ENCODE measurements at regions of chr5 and their contacts with region 1.

Region 1: GRCh38 chr5:142748568-142749249 is 21.5 kb upstream of the ARHGAP26 start:
- DNase-seq: peak; percentile 18
- ATAC-seq: peak; percentile 66; the same call in 1 of the 2 replicates
- H3K4me3 ChIP-seq: no peak overlapping the region
- H3K27ac ChIP-seq: no peak overlapping the region
- H3K4me1 ChIP-seq: no peaks in the 10 kb centered on the region
- H3K27me3 ChIP-seq: no peaks in the 10 kb centered on the region
- CTCF ChIP-seq: peak; percentile 63

Region 2: GRCh38 chr5:141564216-141564692 is 1184.5 kb before region 1 on chr5:
- CTCF ChIA-PET with region 1: no interaction called
- POLR2A ChIA-PET with region 1: no interaction called
- in situ Hi-C with region 1: no loop called
- intact Hi-C with region 1: no loop called
- DNase-seq: peak; percentile 87
- ATAC-seq: peak; percentile 90
- H3K4me3 ChIP-seq: no peak overlapping the region
- H3K27ac ChIP-seq: peak overlapping the region; percentile 83
- H3K4me1 ChIP-seq: peaks cover 12% of the 10 kb centered on the region
- H3K27me3 ChIP-seq: no peaks in the 10 kb centered on the region
- CTCF ChIP-seq: peak; percentile 91

Region 3: GRCh38 chr5:142725231-142726187 is 23.2 kb before region 1 on chr5:
- CTCF ChIA-PET with region 1: interaction called, 4 read pairs
- POLR2A ChIA-PET with region 1: interaction called, 16 read pairs
- in situ Hi-C with region 1: no loop called
- intact Hi-C with region 1: no loop called
- DNase-seq: no peak
- ATAC-seq: no peak
- H3K4me3 ChIP-seq: no peak overlapping the region
- H3K27ac ChIP-seq: no peak overlapping the region
- H3K4me1 ChIP-seq: peaks cover 11% of the 10 kb centered on the region
- H3K27me3 ChIP-seq: no peaks in the 10 kb centered on the region
- CTCF ChIP-seq: no peak

Region 4: DNA sequence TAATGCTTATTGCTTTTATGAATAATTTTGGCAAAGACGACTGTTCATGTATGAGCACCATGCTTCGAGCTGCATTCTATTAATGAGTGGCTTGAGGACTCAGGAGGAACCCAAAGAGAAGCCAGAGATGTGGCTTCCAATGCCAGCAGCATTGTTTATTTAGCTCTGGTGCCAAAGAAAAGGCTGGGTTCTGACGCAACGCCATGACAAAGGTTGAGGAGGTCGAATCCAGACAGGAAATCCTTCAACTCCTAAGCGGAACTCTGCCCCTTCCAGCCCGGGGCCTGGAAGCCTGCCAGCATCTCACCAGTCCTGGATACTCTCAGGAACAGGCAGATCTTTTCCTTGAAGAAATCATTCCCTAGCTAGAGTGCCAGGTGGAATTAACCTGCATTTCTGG is 125.8 kb after region 1 on chr5:
- CTCF ChIA-PET with region 1: interaction called, 3 read pairs
- POLR2A ChIA-PET with region 1: no interaction called
- in situ Hi-C with region 1: no loop called
- intact Hi-C with region 1: loop called (anchors 10 kb)
- DNase-seq: peak; percentile 39
- ATAC-seq: no peak
- H3K4me3 ChIP-seq: no peak overlapping the region
- H3K27ac ChIP-seq: peak overlapping the region; percentile 60; the same call in 1 of the 2 replicates
- H3K4me1 ChIP-seq: peaks cover 67% of the 10 kb centered on the region
- H3K27me3 ChIP-seq: no peaks in the 10 kb centered on the region
- CTCF ChIP-seq: no peak

Measured in Panc1 (cell line).